Posterior cingulate gyrus (tissue), 11 donors: ENCODE measurements at regions of chr5 and their contacts with region 1.

Region 1: DNA sequence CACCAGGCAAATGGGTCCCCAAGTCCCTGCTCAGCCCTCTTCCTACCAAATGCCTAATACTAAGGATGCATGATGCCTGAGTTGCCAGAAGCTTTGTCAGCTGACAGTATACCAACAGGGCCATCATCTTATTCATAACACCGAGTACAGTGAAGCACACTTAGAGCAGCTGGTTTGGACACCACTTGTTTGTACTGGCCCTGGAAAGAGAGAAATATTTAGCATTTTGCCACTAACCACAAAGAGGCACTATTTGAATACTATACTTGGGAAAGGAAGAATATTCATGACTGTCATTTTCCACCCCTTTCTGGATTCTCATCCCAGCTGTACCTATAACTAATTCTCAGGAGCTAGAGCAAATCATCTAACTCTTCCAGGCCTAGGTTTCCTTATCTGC is 364.4 kb upstream of the KIF2A start:
- DNase-seq: no peak

Region 2: GRCh38 chr5:61666064-61666621 is 275.5 kb before region 1 on chr5:
- intact Hi-C with region 1: loop called (anchors 10 kb)
- DNase-seq: no peak

Region 3: GRCh38 chr5:62143268-62144229 is 201.9 kb after region 1 on chr5:
- intact Hi-C with region 1: loop called (anchors 5 kb)
- DNase-seq: no peak